ENCODE measurements at regions of chr9 and their contacts with region 1.

Region 1: DNA sequence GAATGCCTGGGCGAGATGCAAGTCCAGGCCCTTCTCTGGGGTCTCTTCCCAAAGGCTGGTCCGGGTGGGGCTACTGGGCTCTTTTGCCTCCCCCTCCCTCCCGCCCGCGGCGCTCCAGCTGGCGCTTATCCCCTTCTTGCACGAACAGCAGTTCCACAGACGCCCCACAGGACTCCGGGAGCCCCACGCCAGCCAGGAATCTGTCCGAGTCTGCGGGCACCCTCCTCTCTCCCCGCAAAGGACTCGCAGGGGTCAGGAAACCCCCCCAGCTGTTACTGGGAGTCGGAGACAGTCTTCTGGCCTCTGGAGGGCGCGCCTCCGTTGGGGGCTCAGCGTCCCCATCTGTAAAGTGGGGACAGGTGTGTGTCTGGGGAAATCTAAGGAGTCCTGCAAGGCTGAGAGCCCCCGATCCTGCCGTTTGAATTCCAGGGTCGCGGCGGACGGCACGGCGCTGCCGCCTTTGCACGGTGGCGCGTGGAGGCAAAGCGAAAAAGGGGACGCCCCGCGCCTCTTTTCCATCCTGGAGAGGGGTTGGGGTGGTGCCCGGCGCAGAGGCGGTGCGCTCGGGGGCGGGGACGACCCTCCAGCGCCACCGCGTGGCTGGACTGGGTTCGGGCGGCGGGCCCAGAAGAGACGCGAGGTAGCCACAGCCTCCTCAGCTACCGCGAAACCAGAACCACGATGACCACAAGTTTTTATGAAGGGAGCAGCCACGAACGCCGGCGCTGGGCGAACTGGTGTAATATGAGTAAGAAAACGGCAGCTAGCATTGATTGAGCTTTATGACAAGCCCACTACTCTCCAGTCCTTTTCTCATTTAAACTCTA is 2.9 kb upstream of the CCIN start:
- DNase-seq: peak; percentile 88
- H3K4me3 Mint-ChIP-seq: peak overlapping the region; percentile 75
- H3K27ac Mint-ChIP-seq: peak overlapping the region; percentile 13
- H3K4me1 Mint-ChIP-seq: peaks cover 6% of the 10 kb centered on the region
- H3K27me3 Mint-ChIP-seq: no peaks in the 10 kb centered on the region

Region 2: DNA sequence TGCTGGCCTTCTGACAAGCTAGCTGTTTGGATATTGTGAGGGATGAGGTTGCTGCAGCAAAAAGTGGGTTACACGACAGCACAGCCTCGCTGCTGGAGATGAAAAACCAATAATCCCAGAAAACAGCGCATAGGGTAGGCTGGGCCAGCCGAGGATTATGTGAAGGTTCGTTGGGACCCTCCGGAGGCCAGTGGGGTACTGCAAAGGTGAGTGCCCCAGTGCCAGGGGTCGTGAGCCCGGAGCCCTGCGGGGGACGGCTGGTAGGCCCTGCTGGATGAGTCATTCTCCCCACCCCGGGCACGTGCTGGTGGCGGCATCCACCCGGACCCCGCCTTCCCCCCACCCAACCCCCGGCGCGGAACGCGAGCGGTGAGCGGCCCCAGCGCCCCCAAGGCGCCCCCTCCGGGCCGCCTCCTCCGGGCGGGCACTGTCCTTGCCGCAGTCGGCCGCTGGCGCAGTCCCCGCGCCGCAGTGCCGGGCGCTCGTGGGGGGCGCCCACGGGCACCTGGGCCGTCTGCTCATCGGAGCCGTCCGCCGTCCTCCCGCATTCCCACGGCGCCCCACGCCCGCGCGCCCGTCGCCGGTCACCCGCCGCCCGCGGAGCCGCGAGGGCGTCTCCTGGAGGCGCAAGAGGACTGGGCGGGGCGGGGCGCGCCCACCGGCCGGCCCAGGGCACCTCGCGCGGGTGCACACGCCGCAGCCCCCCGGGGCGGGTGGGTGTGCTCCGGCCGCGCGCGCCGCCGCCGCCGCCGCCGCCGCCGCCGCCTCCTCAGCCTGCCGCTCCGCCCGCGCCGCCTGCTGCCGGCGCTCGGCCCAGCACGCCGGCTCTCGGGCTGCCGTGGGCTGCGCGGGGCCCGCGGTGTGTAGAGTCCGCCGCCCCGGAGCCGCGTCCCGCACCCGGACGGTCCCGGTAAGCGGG is 1208.6 kb before region 1 on chr9 and contains the start of gene PHF24:
- CTCF ChIA-PET with region 1: no interaction called
- POLR2A ChIA-PET with region 1: no interaction called
- intact Hi-C with region 1: no loop called
- DNase-seq: peak; percentile 26
- H3K4me3 Mint-ChIP-seq: peak within 1 kb of the TSS; percentile 27
- H3K27ac Mint-ChIP-seq: no peak within 1 kb of the TSS
- H3K4me1 Mint-ChIP-seq: peaks cover 26% of the 10 kb centered on the region
- H3K27me3 Mint-ChIP-seq: peaks cover 47% of the 10 kb centered on the region
- total RNA-seq, gene PHF24: 0.12 TPM in 1 of 2 experiments, not detected in the other

Region 3: DNA sequence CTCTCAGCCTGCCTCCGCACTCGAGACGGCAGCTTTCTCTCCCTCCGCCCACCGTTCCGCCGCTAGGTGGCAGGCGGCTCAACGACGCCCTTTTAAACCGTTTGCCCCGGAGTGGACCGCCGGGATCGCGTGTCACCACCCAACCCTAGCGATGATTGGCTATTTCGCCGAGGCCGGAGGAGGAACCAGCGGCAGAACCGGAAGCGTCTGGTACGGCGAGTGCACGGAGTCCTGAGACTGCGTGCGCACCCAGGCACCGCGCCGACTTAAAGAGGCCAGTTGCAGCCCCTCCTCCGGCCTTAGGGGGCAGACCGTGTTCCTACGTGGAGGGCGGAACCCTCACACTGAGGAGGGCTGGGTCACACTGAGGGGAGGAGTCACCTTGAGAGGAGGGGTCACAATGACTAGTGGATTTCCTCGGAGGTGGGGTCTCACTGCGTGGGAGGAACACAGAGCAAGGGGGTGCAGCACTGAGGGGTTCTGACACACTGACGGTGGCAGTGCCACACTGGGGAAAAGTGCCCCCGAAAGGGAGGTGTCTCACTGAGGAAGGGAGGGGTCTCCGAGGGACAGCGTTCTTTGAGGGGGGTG is 562.2 kb before region 1 on chr9:
- CTCF ChIA-PET with region 1: no interaction called
- POLR2A ChIA-PET with region 1: no interaction called
- intact Hi-C with region 1: no loop called
- DNase-seq: peak; percentile 100
- H3K4me3 Mint-ChIP-seq: peak overlapping the region; percentile 97
- H3K27ac Mint-ChIP-seq: peak overlapping the region; percentile 98
- H3K4me1 Mint-ChIP-seq: peaks cover 29% of the 10 kb centered on the region
- H3K27me3 Mint-ChIP-seq: no peaks in the 10 kb centered on the region

Region 4: DNA sequence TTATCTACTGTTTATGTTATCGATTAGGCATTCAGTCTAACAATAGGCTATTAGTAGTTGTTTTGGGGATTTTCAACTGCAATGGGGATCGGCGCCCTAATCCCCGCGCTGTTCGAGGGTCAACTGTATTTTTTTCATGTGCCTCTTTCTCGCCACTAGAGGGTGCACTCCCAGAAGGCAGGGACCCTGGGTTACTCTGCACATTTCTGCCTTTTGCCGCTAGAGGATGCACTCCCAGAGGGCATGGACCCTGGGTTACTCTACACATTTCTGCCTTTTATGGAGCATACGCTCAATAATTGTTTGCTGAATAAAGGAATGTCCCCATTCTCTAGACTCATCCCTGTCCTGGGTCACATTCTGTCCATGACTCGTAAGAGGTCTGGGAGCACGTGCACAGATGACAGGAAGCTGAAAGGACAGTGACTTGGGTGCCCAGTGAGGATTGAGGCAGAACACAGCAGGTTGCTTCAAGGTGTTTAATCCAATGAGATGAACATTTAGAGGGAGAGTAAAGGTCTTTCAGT is 157.5 kb before region 1 on chr9:
- CTCF ChIA-PET with region 1: interaction called, 22 read pairs
- POLR2A ChIA-PET with region 1: interaction called, 3 read pairs
- intact Hi-C with region 1: no loop called
- DNase-seq: peak; percentile 72
- H3K4me3 Mint-ChIP-seq: no peak overlapping the region
- H3K27ac Mint-ChIP-seq: no peak overlapping the region
- H3K4me1 Mint-ChIP-seq: peaks cover 26% of the 10 kb centered on the region
- H3K27me3 Mint-ChIP-seq: peaks cover 28% of the 10 kb centered on the region

Region 5: DNA sequence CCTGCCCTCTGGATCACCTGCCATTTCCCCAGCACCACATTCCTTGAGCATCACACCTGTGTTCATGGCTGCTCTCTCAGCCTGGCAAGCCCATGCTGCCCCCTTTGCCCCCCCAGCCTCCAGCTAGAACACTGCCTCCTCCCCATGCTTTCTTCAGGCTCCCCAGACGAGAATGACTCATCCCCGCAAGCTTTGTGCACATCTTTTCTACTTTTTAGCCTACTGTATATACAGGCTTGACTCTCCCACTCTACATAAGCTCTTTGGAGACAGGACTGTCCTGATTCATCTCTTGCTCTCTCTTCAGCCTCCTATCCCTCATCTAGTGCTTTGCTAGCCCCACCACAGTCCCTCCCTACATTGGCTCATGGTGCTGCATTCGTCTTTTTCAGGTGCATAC is 49.7 kb before region 1 on chr9:
- CTCF ChIA-PET with region 1: interaction called, 16 read pairs
- POLR2A ChIA-PET with region 1: no interaction called
- intact Hi-C with region 1: no loop called
- DNase-seq: no peak
- H3K4me3 Mint-ChIP-seq: no peak overlapping the region
- H3K27ac Mint-ChIP-seq: no peak overlapping the region
- H3K4me1 Mint-ChIP-seq: peaks cover 2% of the 10 kb centered on the region
- H3K27me3 Mint-ChIP-seq: no peaks in the 10 kb centered on the region

Region 6: GRCh38 chr9:36136272-36136893 is 29.9 kb before region 1 on chr9 and contains the start of gene GLIPR2:
- CTCF ChIA-PET with region 1: interaction called, 34 read pairs
- POLR2A ChIA-PET with region 1: interaction called, 4 read pairs
- intact Hi-C with region 1: loop called (anchors 1 kb)
- DNase-seq: peak; percentile 84
- H3K4me3 Mint-ChIP-seq: peak within 1 kb of the TSS; percentile 79
- H3K27ac Mint-ChIP-seq: peak within 1 kb of the TSS; percentile 48
- H3K4me1 Mint-ChIP-seq: peaks cover 45% of the 10 kb centered on the region
- H3K27me3 Mint-ChIP-seq: no peaks in the 10 kb centered on the region
- total RNA-seq, gene GLIPR2: 24.7 to 25.8 TPM

Region 7: GRCh38 chr9:36148311-36149051 is 17.8 kb before region 1 on chr9:
- CTCF ChIA-PET with region 1: interaction called, 41 read pairs
- POLR2A ChIA-PET with region 1: interaction called, 5 read pairs
- intact Hi-C with region 1: loop called (anchors 2 kb)
- DNase-seq: peak; percentile 88
- H3K4me3 Mint-ChIP-seq: no peak overlapping the region
- H3K27ac Mint-ChIP-seq: peak overlapping the region; percentile 30
- H3K4me1 Mint-ChIP-seq: peaks cover 84% of the 10 kb centered on the region
- H3K27me3 Mint-ChIP-seq: no peaks in the 10 kb centered on the region

Region 8: DNA sequence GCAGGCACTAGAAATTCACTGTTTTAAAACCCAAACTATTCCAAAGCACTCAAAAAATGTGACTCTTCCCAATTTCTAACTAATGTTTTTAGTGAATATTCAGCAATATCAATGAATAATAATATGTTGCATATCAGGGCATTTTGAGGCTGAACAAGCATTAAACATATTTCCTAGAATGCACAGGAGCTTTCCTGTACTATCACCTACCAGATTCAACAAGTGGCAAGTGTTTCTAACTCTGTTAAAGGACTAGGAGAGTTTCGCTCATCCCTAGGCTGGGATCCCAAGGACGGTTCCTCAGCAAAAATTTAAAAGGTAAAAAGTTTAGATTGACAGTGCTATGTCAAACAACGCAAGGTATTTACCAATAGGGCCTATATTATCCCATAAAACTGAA is 70.9 kb after region 1 on chr9:
- CTCF ChIA-PET with region 1: no interaction called
- POLR2A ChIA-PET with region 1: no interaction called
- intact Hi-C with region 1: no loop called
- DNase-seq: no peak
- H3K4me3 Mint-ChIP-seq: no peak overlapping the region
- H3K27ac Mint-ChIP-seq: no peak overlapping the region
- H3K4me1 Mint-ChIP-seq: peaks cover 2% of the 10 kb centered on the region
- H3K27me3 Mint-ChIP-seq: no peaks in the 10 kb centered on the region

Region 9: GRCh38 chr9:36306471-36307306 is 140.4 kb after region 1 on chr9:
- CTCF ChIA-PET with region 1: no interaction called
- POLR2A ChIA-PET with region 1: no interaction called
- intact Hi-C with region 1: no loop called
- DNase-seq: peak; percentile 14
- H3K4me3 Mint-ChIP-seq: no peak overlapping the region
- H3K27ac Mint-ChIP-seq: no peak overlapping the region
- H3K4me1 Mint-ChIP-seq: peaks cover 8% of the 10 kb centered on the region
- H3K27me3 Mint-ChIP-seq: no peaks in the 10 kb centered on the region